ENCODE measurements at regions of chr15 and their contacts with region 1.

Region 1: DNA sequence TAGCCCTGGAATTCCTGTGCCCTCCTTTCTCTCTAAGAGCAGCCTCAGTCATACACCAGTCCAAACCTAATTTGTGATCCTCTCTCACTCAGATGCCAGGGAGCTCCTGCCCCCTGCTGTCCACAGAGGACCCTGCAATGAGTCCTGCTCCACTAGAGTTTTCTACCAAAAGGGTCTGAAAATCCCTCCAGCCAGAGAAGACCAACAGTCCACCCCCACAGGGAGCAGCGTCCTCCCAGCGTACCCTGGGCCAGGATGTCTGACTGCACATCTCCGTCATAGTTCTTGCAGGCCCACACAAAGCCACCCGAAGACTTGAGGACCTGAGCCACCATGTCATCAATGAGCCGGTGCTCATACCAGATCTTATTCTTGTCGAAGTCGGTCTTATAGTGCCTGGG is 15.4 kb downstream of the IDH2 start:
- DNase-seq: peak; percentile 55 to 73 (median 67)
- H3K4me3 ChIP-seq: no peak overlapping the region
- H3K27ac ChIP-seq: no peak overlapping the region
- H3K4me1 ChIP-seq: peaks cover 0 to 23% (median 10%) of the 10 kb centered on the region in 4 experiments
- H3K27me3 ChIP-seq: no peaks in the 10 kb centered on the region

Region 2: DNA sequence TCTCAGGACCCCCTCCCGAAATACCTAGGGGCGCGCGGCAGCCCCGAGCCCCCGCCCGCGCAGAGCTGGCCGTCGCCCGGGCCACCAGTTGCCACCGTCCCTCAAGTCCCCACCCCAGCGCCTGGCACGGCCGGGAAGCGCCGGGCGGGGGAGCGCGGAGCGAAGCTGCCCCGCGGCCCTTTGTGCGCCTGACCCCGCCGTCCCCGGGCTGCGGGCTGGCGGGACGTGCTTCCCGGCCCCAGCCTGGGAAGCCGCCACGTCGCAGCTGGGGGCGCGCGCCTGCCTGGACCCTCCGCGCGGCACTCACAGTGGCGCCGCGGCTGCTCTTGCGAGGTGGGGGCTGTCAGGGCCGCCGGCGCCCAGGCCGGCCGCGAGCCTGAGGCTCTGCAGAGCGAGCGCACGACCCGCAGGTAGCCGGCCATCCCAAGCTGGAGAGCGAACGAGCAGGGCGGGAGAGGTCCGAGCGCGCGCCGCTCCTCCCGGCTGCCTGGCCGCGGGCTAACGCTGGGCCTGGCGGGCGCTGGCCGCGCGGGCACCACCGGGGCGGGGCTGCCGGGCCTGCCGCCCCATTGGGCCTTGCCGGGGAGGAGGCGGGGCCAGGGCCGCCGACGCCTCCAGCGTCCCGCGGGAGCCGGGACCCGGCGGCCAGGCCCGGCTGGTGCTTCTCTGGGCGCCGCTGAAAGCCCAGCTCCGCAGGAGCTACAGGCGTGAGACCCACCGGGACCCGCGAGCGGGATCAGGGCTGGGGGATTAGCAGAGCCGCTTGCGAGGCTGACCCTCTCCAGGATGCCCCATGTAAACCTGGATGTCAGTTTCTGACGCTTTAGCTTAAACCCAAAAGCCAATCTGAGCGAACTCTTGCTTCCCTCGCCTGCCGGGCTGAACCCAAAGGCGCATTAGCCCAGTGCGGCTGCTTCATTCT is 15.4 kb after region 1 on chr15 and contains the start of gene IDH2:
- CTCF ChIA-PET with region 1: interaction called, 23 read pairs
- POLR2A ChIA-PET with region 1: interaction called, 3 read pairs
- DNase-seq: peak; percentile 66 to 84 (median 79)
- H3K4me3 ChIP-seq: peak within 1 kb of the TSS; percentile 76 to 90 (median 83)
- H3K27ac ChIP-seq: peak within 1 kb of the TSS; percentile 68 to 83
- H3K4me1 ChIP-seq: peaks cover 13 to 50% (median 48%) of the 10 kb centered on the region in 4 experiments
- H3K27me3 ChIP-seq: peaks cover 0 to 2% (median 0%) of the 10 kb centered on the region in 5 experiments

Region 3: DNA sequence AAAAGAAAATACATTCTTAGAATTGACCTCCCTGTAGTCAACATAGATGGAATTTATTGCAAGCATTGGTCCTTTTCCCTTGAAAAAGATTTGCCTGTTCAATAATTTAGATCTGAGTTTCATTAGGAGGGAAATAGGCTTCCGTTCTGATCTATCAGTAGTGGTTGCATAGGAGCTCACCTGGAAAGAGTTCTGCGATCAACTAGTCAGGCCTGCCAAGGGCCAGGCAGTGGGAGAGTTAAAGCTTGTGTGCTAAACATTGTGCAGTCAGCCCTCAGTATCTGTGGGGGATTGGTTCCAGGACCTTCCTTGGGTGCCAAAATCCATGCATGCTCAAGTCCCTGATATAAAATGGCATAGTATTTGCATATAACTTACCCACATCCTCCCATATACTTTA is 45.0 kb after region 1 on chr15:
- CTCF ChIA-PET with region 1: no interaction called
- POLR2A ChIA-PET with region 1: no interaction called
- DNase-seq: no peak
- H3K4me3 ChIP-seq: no peak overlapping the region
- H3K27ac ChIP-seq: no peak overlapping the region
- H3K4me1 ChIP-seq: no peaks in the 10 kb centered on the region
- H3K27me3 ChIP-seq: peaks cover 0 to 3% (median 2%) of the 10 kb centered on the region in 5 experiments

Measured in common myeloid progenitor, CD34-positive (primary cell).